CD8-positive, alpha-beta T cell (primary cell): ENCODE measurements at regions of chr1 and their contacts with region 1.

Region 1: GRCh38 chr1:245730801-245731200 is 576.0 kb downstream of the KIF26B start:
- DNase-seq: no peak
- ATAC-seq: no peak
- H3K4me3 ChIP-seq: no peak overlapping the region
- H3K4me3 Mint-ChIP-seq: no peak overlapping the region
- H3K27ac ChIP-seq: no peak overlapping the region
- H3K27ac Mint-ChIP-seq: no peak overlapping the region
- H3K4me1 ChIP-seq: no peaks in the 10 kb centered on the region
- H3K4me1 Mint-ChIP-seq: no peaks in the 10 kb centered on the region
- H3K27me3 ChIP-seq: peaks cover 0 to 2% of the 10 kb centered on the region in 2 experiments
- H3K27me3 Mint-ChIP-seq: no peaks in the 10 kb centered on the region
- CTCF ChIP-seq: no peak

Region 2: GRCh38 chr1:245079021-245079609 is 651.7 kb before region 1 on chr1:
- CTCF ChIA-PET with region 1: no interaction called
- POLR2A ChIA-PET with region 1: no interaction called
- intact Hi-C with region 1: no loop called
- DNase-seq: peak in 1 of 9 experiments; percentile 10
- ATAC-seq: no peak
- H3K4me3 ChIP-seq: no peak overlapping the region
- H3K4me3 Mint-ChIP-seq: no peak overlapping the region
- H3K27ac ChIP-seq: no peak overlapping the region
- H3K27ac Mint-ChIP-seq: no peak overlapping the region
- H3K4me1 ChIP-seq: no peaks in the 10 kb centered on the region
- H3K4me1 Mint-ChIP-seq: no peaks in the 10 kb centered on the region
- H3K27me3 ChIP-seq: no peaks in the 10 kb centered on the region
- H3K27me3 Mint-ChIP-seq: no peaks in the 10 kb centered on the region
- CTCF ChIP-seq: peak; percentile 45

Region 3: GRCh38 chr1:245765230-245766000 is 34.6 kb after region 1 on chr1:
- CTCF ChIA-PET with region 1: no interaction called
- POLR2A ChIA-PET with region 1: no interaction called
- intact Hi-C with region 1: loop called in 1 of 2 experiments (anchors 2 kb)
- DNase-seq: no peak
- ATAC-seq: no peak
- H3K4me3 ChIP-seq: no peak overlapping the region
- H3K4me3 Mint-ChIP-seq: no peak overlapping the region
- H3K27ac ChIP-seq: no peak overlapping the region
- H3K27ac Mint-ChIP-seq: no peak overlapping the region
- H3K4me1 ChIP-seq: no peaks in the 10 kb centered on the region
- H3K4me1 Mint-ChIP-seq: no peaks in the 10 kb centered on the region
- H3K27me3 ChIP-seq: no peaks in the 10 kb centered on the region
- H3K27me3 Mint-ChIP-seq: no peaks in the 10 kb centered on the region
- CTCF ChIP-seq: no peak

Region 4: GRCh38 chr1:245797592-245798348 is 67.0 kb after region 1 on chr1:
- CTCF ChIA-PET with region 1: no interaction called
- POLR2A ChIA-PET with region 1: no interaction called
- intact Hi-C with region 1: no loop called
- DNase-seq: no peak
- ATAC-seq: no peak
- H3K4me3 ChIP-seq: no peak overlapping the region
- H3K4me3 Mint-ChIP-seq: no peak overlapping the region
- H3K27ac ChIP-seq: no peak overlapping the region
- H3K27ac Mint-ChIP-seq: no peak overlapping the region
- H3K4me1 ChIP-seq: no peaks in the 10 kb centered on the region
- H3K4me1 Mint-ChIP-seq: no peaks in the 10 kb centered on the region
- H3K27me3 ChIP-seq: no peaks in the 10 kb centered on the region
- H3K27me3 Mint-ChIP-seq: no peaks in the 10 kb centered on the region
- CTCF ChIP-seq: no peak